ENCODE measurements at regions of chr10 and their contacts with region 1.

Region 1: GRCh38 chr10:22067099-22067498 is 63.6 kb upstream of the DNAJC1 start:
- DNase-seq: no peak
- ATAC-seq: no peak

Region 2: GRCh38 chr10:21825345-21825744 is 241.8 kb before region 1 on chr10:
- intact Hi-C with region 1: no loop called
- DNase-seq: no peak
- ATAC-seq: no peak

Region 3: GRCh38 chr10:22053048-22053447 is 14.1 kb before region 1 on chr10:
- intact Hi-C with region 1: loop called in 1 of 2 experiments (anchors 1 kb)
- DNase-seq: no peak
- ATAC-seq: no peak

Measured in left cardiac atrium (tissue), 4 donors.